Left ventricle myocardium inferior (tissue), 1 donor: ENCODE measurements at regions of chr17 and their contacts with region 1.

Region 1: DNA sequence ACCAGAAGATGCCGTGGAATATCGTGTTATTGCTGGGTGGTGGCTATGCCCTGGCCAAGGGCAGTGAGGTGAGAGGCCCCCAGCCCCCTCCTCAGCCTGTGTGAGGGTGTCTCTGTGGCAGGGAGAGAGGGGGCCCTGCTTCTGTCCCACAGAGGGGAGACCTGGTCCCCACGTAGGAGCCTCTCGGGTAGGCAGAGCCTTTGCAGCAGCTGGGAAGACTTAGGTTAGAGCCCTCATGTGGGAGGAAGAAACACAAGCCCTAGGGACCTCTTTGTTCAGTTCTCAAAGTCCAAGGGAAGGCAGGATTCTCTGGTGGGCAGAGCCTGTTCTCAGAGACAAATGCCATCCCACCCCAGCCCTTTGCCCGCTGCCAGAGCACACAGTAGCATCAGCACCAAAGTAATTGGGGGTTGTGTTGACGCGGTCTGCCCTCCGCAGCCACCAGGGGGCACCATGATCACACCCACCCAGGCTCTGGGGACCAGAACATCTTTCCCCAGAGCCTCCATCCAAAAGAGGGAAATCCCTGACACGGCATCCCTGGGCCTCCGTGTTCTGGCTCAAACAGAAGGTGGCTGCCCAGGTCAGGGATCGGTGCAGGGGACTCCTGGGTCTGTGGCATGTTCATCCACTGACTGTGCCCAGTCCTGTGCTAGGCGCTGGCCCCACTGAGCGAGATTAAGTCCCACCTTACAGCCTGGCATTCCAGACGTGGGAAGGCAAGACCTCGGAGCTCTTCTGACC is 11.5 kb upstream of the FOXN1 start:
- DNase-seq: peak; percentile 66
- H3K4me3 ChIP-seq: no peak overlapping the region
- H3K27ac ChIP-seq: no peak overlapping the region
- H3K4me1 ChIP-seq: no peaks in the 10 kb centered on the region
- H3K27me3 ChIP-seq: peaks cover 70% of the 10 kb centered on the region
- CTCF ChIP-seq: peak; percentile 89

Region 2: GRCh38 chr17:27939474-27940465 is 554.8 kb before region 1 on chr17:
- intact Hi-C with region 1: no loop called
- DNase-seq: no peak
- H3K4me3 ChIP-seq: no peak overlapping the region
- H3K27ac ChIP-seq: no peak overlapping the region
- H3K4me1 ChIP-seq: no peaks in the 10 kb centered on the region
- H3K27me3 ChIP-seq: peaks cover 9% of the 10 kb centered on the region
- CTCF ChIP-seq: no peak

Region 3: DNA sequence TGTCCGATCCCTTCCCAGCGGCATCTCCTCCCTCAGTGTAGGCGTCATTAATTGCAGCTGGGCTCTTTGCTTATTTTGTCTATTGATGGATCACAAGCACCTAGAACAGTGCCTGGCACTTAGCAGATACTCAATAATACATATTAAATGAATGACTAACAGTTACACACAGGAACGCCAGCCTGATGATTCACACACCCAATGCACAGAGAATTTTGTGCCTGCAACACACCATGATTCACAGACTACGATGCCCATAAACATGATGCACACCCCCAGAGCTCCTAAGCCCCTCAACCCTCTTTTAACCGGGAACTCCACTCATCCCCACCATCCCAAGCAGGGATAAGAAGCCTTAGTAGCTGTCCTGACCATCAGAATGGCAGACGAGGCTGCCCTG is 242.2 kb before region 1 on chr17:
- intact Hi-C with region 1: no loop called
- DNase-seq: no peak
- H3K4me3 ChIP-seq: no peak overlapping the region
- H3K27ac ChIP-seq: no peak overlapping the region
- H3K4me1 ChIP-seq: peaks cover 10% of the 10 kb centered on the region
- H3K27me3 ChIP-seq: peaks cover 51% of the 10 kb centered on the region
- CTCF ChIP-seq: no peak

Region 4: GRCh38 chr17:28563475-28563874 is 68.9 kb after region 1 on chr17:
- intact Hi-C with region 1: no loop called
- DNase-seq: no peak
- H3K4me3 ChIP-seq: no peak overlapping the region
- H3K27ac ChIP-seq: no peak overlapping the region
- H3K4me1 ChIP-seq: peaks cover 8% of the 10 kb centered on the region
- H3K27me3 ChIP-seq: no peaks in the 10 kb centered on the region
- CTCF ChIP-seq: no peak

Region 5: GRCh38 chr17:28612936-28613872 is 118.6 kb after region 1 on chr17:
- intact Hi-C with region 1: loop called (anchors 5 kb)
- DNase-seq: no peak
- H3K4me3 ChIP-seq: no peak overlapping the region
- H3K27ac ChIP-seq: no peak overlapping the region
- H3K4me1 ChIP-seq: no peaks in the 10 kb centered on the region
- H3K27me3 ChIP-seq: no peaks in the 10 kb centered on the region
- CTCF ChIP-seq: peak; percentile 79